GM13976 (cell line): ENCODE measurements at regions of chr2 and their contacts with region 1.

Region 1: DNA sequence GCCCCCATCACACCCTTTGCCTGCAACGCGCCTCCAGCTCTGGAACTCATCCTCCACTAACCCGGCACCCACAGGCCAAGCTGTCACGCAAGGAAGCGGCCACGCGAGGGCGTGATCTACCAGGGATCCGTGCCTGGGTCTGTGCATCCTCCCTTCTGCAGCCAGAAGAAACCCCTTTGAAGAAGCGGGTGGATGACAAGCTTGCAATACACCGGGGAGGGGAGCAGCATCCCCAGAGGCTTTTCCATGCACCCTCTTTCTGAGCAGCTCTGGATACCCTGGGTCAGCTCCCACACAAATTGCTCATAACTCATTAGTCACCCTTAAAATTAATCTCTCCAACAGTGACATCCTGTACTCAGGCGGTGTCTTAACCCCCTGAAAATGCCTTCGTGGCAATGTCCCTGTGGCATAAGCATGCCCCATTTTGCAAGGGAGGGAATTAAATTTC is 47.6 kb downstream of the PDCL3 start:
- DNase-seq: peak; percentile 76
- CTCF ChIP-seq: peak; percentile 52

Region 2: GRCh38 chr2:100984892-100985379 is 374.5 kb after region 1 on chr2:
- in situ Hi-C with region 1: loop called (anchors 10 kb)
- DNase-seq: peak; percentile 84
- CTCF ChIP-seq: peak; percentile 85

Region 3: DNA sequence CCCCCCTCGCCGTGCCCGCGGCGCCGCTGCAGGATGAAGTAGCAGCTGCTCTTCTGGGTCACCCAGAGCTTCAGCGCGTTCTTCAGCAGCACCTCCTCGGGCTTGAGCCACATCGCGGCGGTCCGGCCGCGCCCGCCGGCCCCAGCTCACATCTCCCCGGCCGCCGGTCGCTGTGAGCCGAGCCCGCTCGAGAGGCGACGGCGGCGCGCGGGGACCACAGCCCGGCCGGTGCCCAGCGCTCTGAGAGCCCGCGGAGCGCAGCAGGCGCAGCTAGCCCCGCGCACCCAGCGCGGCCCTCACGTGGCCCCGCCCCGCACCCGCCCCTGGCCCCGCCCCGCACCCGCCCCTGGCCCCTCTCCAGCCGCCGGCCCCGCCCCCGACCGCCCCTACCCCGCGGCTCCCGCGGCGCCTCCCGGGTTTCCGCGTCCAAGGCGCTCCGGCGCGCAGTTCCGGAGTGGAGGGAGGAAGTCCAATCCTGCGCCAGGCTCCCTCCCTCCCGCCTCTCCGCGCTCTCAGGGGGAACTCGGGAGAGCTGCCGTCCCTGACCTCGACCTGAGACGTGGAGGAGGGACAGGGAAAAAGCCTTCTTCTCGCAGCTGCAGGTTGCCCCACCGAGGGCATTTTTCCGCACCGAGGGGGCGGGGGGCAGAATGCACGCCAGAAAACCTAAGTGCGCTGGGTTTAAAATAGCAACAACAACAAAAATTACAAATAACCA is 540.9 kb after region 1 on chr2 and contains the start of gene TBC1D8:
- in situ Hi-C with region 1: loop called (anchors 25 kb)
- DNase-seq: peak; percentile 93
- CTCF ChIP-seq: no peak